Activated CD8-positive, alpha-beta T cell treated with anti-CD3 and anti-CD28 coated beads, Interleukin-2, amount 10 ng/mL, durations not matched to agents 7 days and 5 days (primary cell): ENCODE measurements at regions of chr3 and their contacts with region 1.

Region 1: DNA sequence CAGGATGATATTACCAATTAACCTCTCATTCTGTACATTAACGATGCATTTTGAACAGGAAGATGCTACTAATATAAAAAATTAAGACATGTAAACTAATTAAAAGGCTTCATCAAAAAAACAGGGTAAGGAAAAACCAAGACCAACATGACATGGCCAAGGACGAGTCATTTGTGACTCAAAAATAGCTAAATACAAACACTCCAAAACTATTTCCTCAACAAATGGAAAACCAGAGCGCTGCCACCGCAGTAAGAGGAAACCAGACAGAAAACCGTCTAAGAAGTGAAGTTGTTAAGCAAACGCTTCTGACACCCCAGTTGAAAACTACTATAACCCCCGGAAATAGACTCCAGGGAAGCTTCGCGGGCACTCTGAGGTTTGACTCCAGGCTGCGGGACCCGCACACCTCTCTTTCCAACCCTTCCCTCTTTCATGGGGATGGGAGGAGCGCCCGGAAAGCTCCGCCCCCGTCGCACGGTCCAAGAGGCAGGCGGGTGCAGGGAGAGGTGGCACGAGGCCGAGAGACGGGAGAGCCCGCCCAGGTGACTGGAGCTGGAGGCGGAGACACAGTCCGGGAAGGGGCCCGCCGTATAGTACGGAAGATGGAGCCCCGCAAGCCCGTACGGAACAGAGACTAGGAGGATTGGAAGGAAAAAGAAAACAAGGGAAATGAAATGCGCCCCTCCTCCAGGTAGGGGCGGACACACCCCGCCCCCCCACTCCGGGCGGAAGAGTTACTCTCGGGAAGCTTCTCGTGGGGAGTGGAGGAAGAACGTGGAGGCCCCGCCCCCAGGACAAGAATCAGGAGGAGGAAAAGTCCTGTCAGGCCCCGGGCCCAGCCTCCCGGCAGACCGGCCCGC is 708 bp downstream of the DCAF1 start:
- DNase-seq: peak; percentile 89
- ATAC-seq: peak; percentile 77
- H3K4me3 Mint-ChIP-seq: peak overlapping the region; percentile 84
- H3K27ac Mint-ChIP-seq: peak overlapping the region; percentile 98
- H3K4me1 Mint-ChIP-seq: peaks cover 23% of the 10 kb centered on the region
- H3K27me3 Mint-ChIP-seq: no peaks in the 10 kb centered on the region

Region 2: GRCh38 chr3:51269466-51269865 is 229.6 kb before region 1 on chr3:
- CTCF ChIA-PET with region 1: no interaction called
- POLR2A ChIA-PET with region 1: no interaction called
- DNase-seq: no peak
- ATAC-seq: no peak
- H3K4me3 Mint-ChIP-seq: no peak overlapping the region
- H3K27ac Mint-ChIP-seq: no peak overlapping the region
- H3K4me1 Mint-ChIP-seq: peaks cover 13% of the 10 kb centered on the region
- H3K27me3 Mint-ChIP-seq: no peaks in the 10 kb centered on the region

Region 3: GRCh38 chr3:51391075-51391567 is 108.0 kb before region 1 on chr3 and contains the start of gene RBM15B:
- CTCF ChIA-PET with region 1: interaction called, 36 read pairs
- POLR2A ChIA-PET with region 1: interaction called, 18 read pairs
- DNase-seq: peak; percentile 98
- ATAC-seq: peak; percentile 95
- H3K4me3 Mint-ChIP-seq: peak within 1 kb of the TSS; percentile 83
- H3K27ac Mint-ChIP-seq: peak within 1 kb of the TSS; percentile 94
- H3K4me1 Mint-ChIP-seq: peaks cover 79% of the 10 kb centered on the region
- H3K27me3 Mint-ChIP-seq: no peaks in the 10 kb centered on the region
- total RNA-seq, gene RBM15B: 30.7 to 30.8 TPM

Region 4: GRCh38 chr3:51401735-51402134 is 97.4 kb before region 1 on chr3:
- CTCF ChIA-PET with region 1: no interaction called
- POLR2A ChIA-PET with region 1: no interaction called
- DNase-seq: no peak
- ATAC-seq: no peak
- H3K4me3 Mint-ChIP-seq: no peak overlapping the region
- H3K27ac Mint-ChIP-seq: no peak overlapping the region
- H3K4me1 Mint-ChIP-seq: peaks cover 15% of the 10 kb centered on the region
- H3K27me3 Mint-ChIP-seq: no peaks in the 10 kb centered on the region

Region 5: DNA sequence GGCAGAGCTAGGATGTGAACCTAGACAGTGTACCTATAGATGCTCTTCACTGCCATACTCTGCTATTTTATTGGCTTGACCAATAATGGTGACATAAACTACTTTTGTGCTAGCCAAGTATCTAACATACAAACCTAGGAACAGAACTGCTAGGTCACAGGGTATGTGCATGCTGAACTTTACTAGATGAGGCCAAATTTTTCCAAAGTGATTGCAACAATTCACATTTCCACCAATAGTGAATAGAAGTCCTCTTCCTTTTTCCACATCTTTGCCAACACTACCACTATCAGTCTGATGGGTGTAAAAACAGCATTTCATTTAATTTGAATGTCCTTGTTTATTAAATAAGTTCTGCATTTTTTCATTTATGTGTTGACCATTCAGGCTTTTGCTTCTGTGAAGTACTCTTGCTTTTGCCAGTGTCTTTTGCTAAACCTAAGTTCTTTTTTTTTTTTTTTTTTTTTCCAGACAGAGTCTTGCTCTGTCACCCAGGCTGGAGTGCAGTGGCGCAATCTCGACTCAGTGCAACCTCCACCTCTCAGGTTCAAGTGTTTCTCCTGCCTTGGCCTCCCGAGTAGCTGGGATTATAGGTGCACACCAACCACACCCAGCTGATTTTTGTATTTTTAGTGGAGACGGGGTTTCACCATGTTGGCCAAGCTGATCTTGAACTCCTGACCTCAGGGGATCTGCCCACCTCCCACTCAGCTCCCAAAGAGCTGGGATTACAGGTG is 53.4 kb before region 1 on chr3:
- CTCF ChIA-PET with region 1: no interaction called
- POLR2A ChIA-PET with region 1: no interaction called
- DNase-seq: no peak
- ATAC-seq: no peak
- H3K4me3 Mint-ChIP-seq: no peak overlapping the region
- H3K27ac Mint-ChIP-seq: no peak overlapping the region
- H3K4me1 Mint-ChIP-seq: peaks cover 18% of the 10 kb centered on the region
- H3K27me3 Mint-ChIP-seq: no peaks in the 10 kb centered on the region

Region 6: GRCh38 chr3:51538459-51539290 is 39.6 kb after region 1 on chr3 and contains the start of gene RAD54L2:
- CTCF ChIA-PET with region 1: interaction called, 56 read pairs
- POLR2A ChIA-PET with region 1: interaction called, 7 read pairs
- DNase-seq: peak; percentile 75
- ATAC-seq: peak; percentile 93
- H3K4me3 Mint-ChIP-seq: peak within 1 kb of the TSS; percentile 86
- H3K27ac Mint-ChIP-seq: peak within 1 kb of the TSS; percentile 84
- H3K4me1 Mint-ChIP-seq: peaks cover 33% of the 10 kb centered on the region
- H3K27me3 Mint-ChIP-seq: no peaks in the 10 kb centered on the region
- total RNA-seq, gene RAD54L2: 28.8 to 28.9 TPM

Region 7: DNA sequence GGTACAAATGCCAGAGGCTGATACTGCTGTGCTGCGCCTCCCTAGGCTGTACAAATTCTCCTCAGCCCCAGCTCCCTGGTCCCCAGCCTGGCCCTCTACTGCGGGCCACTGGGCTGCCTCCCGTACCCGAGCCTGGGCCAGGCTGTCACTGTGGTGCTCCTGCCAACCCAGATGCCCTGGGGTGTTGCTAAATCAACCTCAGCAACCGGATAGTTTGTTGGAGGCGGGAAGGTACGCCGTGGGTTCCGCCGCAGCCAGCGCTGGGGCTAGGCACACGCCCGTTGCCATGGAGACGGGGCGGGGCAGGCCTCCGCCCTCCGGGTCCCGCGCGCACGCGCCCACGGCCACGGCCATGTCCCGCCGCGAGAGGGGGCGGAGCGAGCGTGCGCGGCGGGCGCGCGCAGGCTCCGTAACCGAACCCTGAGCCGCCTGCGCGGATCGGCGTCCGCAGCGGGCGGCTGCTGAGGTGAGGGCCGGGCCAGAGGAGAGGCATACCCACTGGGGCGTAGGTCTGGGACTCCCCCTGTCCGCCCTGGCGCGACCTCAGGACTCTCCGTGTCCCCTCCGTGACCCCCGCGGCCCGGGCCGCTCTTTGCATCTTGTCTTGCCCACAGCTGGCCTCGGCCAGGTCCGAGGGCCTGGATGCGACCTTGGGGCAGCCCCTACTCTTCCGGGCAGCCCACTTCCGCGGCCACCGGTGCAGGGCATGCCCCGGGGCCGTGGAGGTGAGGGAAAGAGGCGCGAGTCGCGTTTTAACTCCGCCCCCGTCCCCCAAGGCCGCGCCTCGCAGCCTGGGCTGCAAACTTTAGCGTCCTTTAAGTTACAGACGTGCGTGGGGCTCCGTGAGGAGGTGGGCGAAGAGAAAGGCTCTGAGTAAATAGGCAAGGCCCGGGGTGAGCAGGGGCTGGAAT is 172.0 kb after region 1 on chr3 and contains the start of gene TEX264:
- CTCF ChIA-PET with region 1: interaction called, 238 read pairs
- POLR2A ChIA-PET with region 1: interaction called, 33 read pairs
- DNase-seq: peak; percentile 94
- ATAC-seq: peak; percentile 80
- H3K4me3 Mint-ChIP-seq: peak within 1 kb of the TSS; percentile 88
- H3K27ac Mint-ChIP-seq: peak within 1 kb of the TSS; percentile 85
- H3K4me1 Mint-ChIP-seq: peaks cover 72% of the 10 kb centered on the region
- H3K27me3 Mint-ChIP-seq: no peaks in the 10 kb centered on the region
- total RNA-seq, gene TEX264: 62.6 to 65.0 TPM

Region 8: GRCh38 chr3:51799879-51800749 is 301.0 kb after region 1 on chr3:
- CTCF ChIA-PET with region 1: interaction called, 27 read pairs
- POLR2A ChIA-PET with region 1: interaction called, 3 read pairs
- DNase-seq: peak; percentile 63
- ATAC-seq: peak; percentile 52
- H3K4me3 Mint-ChIP-seq: no peak overlapping the region
- H3K27ac Mint-ChIP-seq: no peak overlapping the region
- H3K4me1 Mint-ChIP-seq: peaks cover 48% of the 10 kb centered on the region
- H3K27me3 Mint-ChIP-seq: peaks cover 10% of the 10 kb centered on the region